Activated B cell treated with CpG ODN at 0.5 μM for 24 hours (primary cell): ENCODE measurements at regions of chr2 and their contacts with region 1.

Region 1: DNA sequence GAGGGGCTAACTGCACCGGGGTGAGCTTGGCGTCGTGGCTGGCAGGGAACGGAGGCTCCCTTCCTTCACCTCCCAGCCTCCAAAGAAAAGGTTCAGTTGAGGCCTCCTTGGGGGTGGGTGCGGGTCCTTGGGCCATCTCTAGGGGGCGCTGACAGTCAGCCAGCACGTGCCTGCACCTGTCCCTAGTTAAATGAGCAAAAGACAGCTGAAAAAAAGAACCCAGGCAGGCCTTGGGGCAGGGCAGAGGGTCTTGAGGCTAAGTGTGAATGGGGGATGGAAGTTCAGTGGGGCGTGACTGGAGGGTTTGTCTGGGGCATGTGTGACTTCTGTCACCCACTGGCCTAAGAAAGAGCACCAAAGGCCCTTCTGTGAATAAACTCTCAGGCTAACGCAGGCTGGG is 56.4 kb downstream of the ZFP36L2 start:
- DNase-seq: peak; percentile 43
- ATAC-seq: no peak
- H3K4me3 Mint-ChIP-seq: peak overlapping the region; percentile 79
- H3K27ac Mint-ChIP-seq: peak overlapping the region; percentile 98
- H3K4me1 Mint-ChIP-seq: peaks cover 82% of the 10 kb centered on the region
- H3K27me3 Mint-ChIP-seq: no peaks in the 10 kb centered on the region
- CTCF ChIP-seq: no peak

Region 2: DNA sequence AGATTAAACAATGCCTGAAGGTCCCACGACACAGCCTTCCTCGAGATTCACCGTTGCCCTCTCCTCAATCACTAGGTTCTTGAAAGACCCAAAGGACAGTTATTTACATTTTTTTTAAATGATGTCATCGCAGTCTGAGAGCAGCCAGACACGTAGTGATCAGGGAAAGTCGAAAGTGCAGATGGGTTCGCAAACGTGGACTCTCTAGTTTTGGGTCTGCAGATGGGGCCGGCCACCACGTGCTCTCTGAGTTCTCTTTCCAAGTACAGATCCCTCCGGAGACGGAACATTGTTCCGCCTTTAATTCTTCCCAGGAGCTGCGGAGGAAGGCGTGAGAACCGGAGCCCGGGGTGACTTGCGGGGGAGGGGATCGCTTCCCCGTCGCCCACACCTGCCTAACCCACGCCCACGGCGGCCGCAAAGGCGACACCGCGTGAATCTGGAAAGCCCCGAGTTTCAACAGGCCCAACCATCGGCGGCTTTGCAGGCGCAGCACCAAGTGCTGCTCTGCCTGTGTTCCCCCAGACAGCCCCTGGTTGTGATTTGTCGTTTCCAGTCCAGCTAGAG is 1067.9 kb before region 1 on chr2:
- CTCF ChIA-PET with region 1: no interaction called
- POLR2A ChIA-PET with region 1: no interaction called
- intact Hi-C with region 1: loop called (anchors 5 kb)
- DNase-seq: peak; percentile 88
- ATAC-seq: peak; percentile 72
- H3K4me3 Mint-ChIP-seq: peak overlapping the region; percentile 88
- H3K27ac Mint-ChIP-seq: no peak overlapping the region
- H3K4me1 Mint-ChIP-seq: peaks cover 47% of the 10 kb centered on the region
- H3K27me3 Mint-ChIP-seq: no peaks in the 10 kb centered on the region
- CTCF ChIP-seq: no peak

Region 3: DNA sequence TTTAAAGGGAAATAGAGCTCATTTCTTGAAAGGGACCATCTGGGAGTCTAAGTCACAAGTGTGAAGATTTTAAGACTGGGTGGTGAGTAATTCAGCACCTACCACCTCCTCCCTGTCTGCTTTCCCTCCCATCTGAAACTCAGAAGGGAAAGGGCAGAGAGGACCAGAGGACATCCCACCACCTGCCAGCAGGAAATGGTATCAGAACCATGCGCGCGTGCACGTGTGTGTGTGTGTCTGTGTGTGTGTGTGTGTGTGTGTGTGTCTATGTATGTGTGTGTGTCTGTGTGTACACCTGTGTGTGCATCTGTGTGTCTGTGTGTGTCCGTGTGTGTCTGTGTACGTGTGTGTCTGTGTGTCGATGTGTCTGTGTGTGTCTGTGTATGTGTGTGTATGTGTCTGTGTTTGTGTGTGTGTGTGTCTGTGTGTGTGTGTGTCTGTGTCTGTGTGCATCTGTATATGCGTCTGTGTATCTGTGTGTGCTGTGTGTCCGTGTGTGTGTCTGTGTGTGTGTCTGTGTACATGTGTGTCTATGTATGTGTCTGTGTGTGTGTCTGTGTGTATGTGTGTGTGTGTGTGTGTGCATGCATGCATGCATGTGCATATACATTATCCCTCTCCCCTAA is 20.4 kb before region 1 on chr2:
- CTCF ChIA-PET with region 1: interaction called, 3 read pairs
- POLR2A ChIA-PET with region 1: interaction called, 10 read pairs
- intact Hi-C with region 1: no loop called
- DNase-seq: no peak
- ATAC-seq: no peak
- H3K4me3 Mint-ChIP-seq: no peak overlapping the region
- H3K27ac Mint-ChIP-seq: no peak overlapping the region
- H3K4me1 Mint-ChIP-seq: peaks cover 22% of the 10 kb centered on the region
- H3K27me3 Mint-ChIP-seq: no peaks in the 10 kb centered on the region
- CTCF ChIP-seq: no peak

Region 4: DNA sequence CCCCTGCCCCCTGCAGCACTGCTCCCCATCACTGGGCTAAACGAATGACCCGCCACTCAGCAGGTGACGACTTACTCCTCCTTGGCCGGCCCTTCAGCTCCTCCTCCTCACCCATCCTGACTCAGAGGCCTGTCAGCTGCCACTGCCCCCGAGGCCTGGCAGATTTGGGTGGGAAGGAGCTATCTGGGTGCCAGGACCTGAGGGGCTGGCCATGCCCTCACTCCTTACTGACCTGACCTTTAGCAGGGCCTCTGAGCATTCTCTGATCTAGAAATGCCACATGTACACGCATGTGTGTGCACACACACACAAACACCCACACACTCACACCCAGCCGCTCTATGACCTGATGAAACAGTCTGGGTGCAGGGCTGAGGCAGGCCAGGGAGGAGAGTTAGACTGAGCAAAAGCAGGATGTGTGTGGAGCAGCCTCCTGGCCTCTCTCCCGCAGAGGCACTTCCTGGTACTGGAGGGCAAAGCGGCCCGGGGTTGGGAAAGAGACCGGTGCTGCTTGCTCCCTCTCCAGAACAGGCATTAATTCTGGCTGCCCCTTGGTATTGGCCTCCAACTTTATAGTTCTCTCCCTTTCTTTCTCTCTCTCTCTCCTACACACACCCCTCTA is 11.6 kb before region 1 on chr2:
- CTCF ChIA-PET with region 1: no interaction called
- POLR2A ChIA-PET with region 1: interaction called, 13 read pairs
- intact Hi-C with region 1: loop called (anchors 1 kb)
- DNase-seq: no peak
- ATAC-seq: peak; percentile 9
- H3K4me3 Mint-ChIP-seq: peak overlapping the region; percentile 71
- H3K27ac Mint-ChIP-seq: peak overlapping the region; percentile 96
- H3K4me1 Mint-ChIP-seq: peaks cover 47% of the 10 kb centered on the region
- H3K27me3 Mint-ChIP-seq: no peaks in the 10 kb centered on the region
- CTCF ChIP-seq: no peak

Region 5: DNA sequence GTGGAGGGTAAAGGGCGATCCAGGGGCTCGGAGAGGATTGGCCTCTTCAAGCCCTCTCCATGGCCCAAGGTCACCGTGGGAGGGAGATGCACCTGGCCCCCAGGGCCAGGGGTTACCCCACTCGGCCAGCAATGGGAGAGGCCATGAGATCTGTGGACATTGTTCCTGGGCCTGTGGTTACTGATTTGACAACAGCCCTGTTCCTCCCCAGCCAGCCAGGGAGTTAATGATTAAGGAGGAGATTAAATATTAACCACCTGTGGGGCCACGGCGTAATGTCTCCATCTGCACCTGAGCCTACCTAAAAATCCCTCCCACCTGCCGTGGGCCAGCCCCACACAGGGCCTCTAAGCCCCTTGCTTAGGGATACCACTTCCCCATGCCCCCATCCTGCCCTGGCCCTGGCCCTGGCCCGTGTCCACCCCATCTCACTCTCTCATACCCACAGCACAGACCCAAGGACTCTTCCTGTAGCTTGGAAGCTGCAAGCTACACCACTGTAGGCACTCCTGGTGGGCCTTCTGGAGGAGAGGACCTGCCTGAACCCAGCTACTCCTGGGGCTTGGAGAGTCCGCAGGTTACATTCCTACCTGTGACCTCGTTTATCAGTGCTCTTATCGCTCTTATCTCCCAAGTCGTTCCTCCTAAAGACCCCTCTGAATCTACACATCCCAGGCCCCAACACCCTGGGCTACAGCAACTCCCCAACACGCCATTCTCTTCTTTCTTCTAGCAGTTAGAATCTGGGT is 24.3 kb after region 1 on chr2:
- CTCF ChIA-PET with region 1: interaction called, 3 read pairs
- POLR2A ChIA-PET with region 1: interaction called, 43 read pairs
- intact Hi-C with region 1: loop called (anchors 1 kb)
- DNase-seq: no peak
- ATAC-seq: peak; percentile 6
- H3K4me3 Mint-ChIP-seq: peak overlapping the region; percentile 35
- H3K27ac Mint-ChIP-seq: peak overlapping the region; percentile 79
- H3K4me1 Mint-ChIP-seq: peaks cover 44% of the 10 kb centered on the region
- H3K27me3 Mint-ChIP-seq: no peaks in the 10 kb centered on the region
- CTCF ChIP-seq: no peak

Region 6: DNA sequence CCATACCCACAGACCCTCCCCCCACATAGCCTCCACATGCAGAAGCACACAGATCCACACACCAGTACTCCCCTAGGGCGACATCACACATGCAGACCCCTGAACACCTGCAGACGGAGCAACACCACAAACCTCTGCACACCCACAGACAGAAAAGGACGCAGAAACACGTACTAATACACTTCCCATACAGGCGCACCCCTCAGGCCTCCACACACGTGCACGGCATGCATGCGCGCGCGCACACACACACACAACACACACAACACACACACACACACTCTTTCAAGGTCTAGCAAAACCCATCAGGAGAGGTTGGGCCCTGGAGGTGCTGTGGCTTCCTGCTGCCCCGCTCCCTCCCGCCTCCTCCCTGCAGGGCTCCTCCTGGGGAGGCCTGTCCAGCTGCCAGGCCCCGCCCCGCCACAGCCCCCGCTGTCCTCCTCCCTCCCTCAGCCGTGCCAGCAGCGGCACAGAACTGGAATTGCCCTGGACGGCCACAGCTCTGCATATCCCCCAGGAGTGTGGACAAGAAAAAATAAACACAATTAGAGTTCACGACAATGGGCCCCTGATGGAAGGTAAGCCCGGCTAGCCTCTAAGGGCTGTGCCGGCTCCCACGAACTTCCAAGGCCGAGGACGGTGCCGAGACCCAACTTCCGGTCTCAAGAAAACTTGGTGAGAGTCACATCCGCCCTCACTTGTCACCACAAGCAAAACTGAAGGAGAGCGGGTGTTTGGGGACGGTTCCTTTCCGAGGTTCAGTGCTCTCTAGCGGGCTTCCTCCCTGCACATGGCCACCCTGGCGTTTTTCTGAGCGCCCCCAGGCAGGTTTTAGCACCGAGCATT is 49.6 kb after region 1 on chr2:
- CTCF ChIA-PET with region 1: interaction called, 32 read pairs
- POLR2A ChIA-PET with region 1: interaction called, 344 read pairs
- intact Hi-C with region 1: loop called (anchors 1 kb)
- DNase-seq: peak; percentile 58
- ATAC-seq: peak; percentile 54
- H3K4me3 Mint-ChIP-seq: peak overlapping the region; percentile 92
- H3K27ac Mint-ChIP-seq: peak overlapping the region; percentile 99
- H3K4me1 Mint-ChIP-seq: peaks cover 71% of the 10 kb centered on the region
- H3K27me3 Mint-ChIP-seq: peaks cover 2% of the 10 kb centered on the region
- CTCF ChIP-seq: no peak